Sciatic nerve (tissue), 2 donors: ENCODE measurements at regions of chr3 and their contacts with region 1.

Region 1: GRCh38 chr3:84783281-84783680 is 175.5 kb upstream of the CADM2 start:
- DNase-seq: no peak
- ATAC-seq: no peak

Region 2: DNA sequence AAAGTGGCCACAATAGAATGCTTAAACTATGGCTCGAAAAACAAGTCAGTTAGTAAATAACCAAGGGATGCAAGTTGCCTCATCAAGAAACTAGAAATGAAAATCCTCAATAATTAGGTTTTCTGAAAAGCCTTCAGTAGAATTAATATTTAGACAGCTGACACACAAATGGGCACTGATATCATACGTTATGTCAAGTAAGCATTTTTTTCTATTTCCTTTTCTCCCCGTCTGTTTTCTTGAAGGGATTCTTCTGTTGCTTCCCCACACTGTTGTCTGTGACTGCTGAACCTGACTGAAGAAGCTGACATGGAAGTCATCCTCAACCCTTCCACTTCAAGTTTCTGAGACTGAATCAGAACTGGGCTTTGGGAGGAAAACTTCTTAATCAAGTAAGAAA is 23.7 kb after region 1 on chr3:
- intact Hi-C with region 1: loop called (anchors 2 kb)
- DNase-seq: no peak
- ATAC-seq: no peak

Region 3: DNA sequence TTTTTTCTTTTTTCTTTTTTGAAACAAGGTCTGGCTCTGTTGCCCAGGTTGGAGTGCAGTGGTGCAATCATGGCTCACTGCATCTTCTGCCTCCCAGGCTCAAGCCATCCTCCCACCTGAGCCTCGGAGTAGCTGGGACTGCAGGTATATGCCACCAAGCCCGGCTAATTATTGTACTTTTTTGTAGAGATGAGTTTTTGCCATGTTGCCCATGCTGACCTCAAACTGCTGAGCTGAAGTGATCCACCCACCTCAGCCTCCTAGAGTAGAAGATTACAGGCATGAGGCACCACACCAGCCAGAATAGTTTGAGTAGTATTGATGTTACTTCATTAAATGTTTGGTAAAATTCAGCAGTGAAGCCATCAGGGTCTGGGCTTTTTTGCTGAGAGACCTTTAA is 427.3 kb after region 1 on chr3:
- intact Hi-C with region 1: loop called (anchors 5 kb)
- DNase-seq: no peak
- ATAC-seq: no peak